Activated CD4-positive, alpha-beta T cell treated with anti-CD3 and anti-CD28 coated beads, Interleukin-2, amount 10 ng/mL, durations not matched to agents 24 days and 14 days (primary cell): ENCODE measurements at regions of chr17 and their contacts with region 1.

Region 1: DNA sequence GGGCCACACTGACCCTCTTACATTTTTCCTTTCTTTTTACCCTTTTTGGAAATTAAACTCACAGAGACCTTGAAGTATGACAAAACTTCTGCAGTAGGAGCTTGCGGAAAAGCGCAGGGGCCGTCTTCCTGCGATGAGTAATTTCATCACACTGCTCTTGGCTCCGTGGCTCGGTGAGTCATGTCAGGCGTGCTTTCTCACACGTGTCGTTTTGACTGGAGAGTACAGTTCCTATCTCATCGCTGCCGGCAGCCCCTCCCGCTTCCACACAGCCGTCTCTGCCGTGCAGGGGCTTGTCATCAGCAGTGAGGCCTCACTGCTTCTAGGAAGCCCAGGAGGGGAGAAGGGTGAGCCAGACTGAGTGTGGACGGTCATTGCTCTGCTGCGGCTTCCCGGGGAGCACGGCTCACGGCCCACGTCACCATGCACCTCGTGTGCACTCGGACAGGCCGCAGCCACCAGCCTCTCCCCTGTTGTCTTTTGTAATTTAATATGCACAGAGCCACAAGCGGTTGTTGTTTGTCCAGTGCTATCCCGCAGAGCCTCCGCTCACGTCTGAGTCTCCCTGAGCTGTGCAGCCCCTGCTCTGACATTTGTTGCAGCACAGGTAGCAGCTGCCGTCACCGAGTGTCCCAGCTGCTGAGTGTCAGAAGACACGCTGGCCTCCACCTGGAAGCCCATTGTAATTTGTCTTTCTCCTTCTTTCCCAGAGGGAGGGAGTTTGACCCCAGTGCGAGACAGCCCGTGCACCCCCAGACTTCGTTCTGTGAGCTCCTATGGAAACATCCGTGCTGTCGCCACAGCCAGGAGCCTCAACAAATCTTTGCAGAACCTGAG is 99.4 kb upstream of the CHMP6 start:
- DNase-seq: peak; percentile 95
- H3K4me3 Mint-ChIP-seq: peak overlapping the region; percentile 82
- H3K27ac Mint-ChIP-seq: peak overlapping the region; percentile 93
- H3K4me1 Mint-ChIP-seq: peaks cover 69% of the 10 kb centered on the region
- H3K27me3 Mint-ChIP-seq: no peaks in the 10 kb centered on the region

Region 2: DNA sequence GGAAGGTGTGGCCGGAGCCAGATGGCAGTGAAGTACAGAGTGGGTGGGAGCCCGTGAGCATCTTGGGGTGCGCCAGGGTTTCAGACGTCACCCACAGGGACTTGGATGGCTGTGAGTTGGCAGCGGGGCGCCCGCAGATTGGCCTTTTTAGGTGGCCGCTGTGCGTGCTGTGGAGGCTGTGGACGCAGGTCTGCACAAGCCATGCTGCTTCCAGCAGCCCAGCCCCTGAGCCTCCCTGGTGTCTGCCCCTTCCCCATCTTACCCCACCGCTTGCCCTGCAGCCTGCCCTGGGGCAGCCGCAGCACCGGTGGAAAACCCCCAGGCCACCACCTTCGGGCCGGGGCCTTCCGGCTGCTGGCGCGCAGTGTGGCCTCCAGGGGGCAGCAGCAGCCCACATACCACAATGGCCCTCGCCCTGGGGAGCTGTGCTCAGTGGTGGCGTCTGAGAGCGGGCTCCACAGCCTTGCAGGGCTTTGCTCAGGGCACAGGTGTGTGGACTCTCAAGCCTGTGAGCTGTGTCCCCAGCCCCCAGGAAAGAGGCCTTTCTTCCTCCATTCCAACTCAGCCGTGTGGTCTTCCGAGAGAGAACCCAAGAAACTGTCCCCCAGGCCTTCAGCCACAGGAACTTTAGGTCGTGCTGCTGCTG is 465.4 kb before region 1 on chr17:
- intact Hi-C with region 1: loop called (anchors 5 kb)
- DNase-seq: peak; percentile 97
- H3K4me3 Mint-ChIP-seq: no peak overlapping the region
- H3K27ac Mint-ChIP-seq: no peak overlapping the region
- H3K4me1 Mint-ChIP-seq: peaks cover 13% of the 10 kb centered on the region
- H3K27me3 Mint-ChIP-seq: no peaks in the 10 kb centered on the region

Region 3: DNA sequence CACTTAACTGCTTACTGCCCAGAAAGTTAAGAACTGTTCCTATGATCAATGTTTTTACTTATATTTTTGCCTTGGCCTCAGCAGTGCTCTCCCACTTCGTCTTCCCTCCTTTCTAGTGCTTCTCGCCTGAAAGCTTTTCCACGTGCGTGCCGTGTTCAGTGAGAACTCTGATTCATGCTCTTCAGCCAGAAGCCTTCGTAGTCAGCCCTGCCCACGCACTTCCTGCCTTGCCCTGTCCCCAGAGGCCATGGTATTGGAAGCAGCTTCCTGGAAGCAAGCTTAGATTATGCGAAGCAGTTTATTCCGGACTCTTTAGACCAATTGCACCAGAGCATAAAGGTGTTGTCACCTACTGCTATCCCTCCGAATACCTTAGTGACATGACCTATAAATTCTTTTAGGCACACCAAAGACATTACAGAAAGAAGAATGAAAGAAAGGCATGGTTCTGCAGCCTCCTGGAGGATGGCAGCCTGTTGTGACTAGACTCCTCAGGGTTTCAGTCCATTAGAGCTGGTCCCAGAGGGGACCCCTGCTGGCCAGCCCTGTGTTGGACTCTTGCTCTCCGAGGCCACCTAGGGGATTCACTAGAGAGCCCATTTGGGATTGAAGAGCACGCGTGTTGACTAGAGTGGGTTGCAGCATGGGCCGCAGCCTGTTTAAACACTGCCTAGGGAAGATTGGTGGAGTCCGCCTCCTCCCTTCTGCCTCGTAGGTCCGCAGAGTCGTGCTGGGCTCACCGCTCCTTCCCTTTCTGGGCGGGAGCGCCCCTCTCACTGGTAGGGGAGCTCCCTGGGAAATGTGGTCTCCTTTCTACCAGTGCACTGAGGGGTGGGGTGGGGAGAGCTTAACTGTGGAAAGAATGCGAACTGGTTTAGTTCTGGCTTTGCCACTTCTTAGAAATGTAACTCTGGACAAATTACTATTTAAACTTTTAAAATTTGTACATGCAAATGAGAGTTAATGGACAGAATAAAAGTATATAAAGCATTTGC is 242.3 kb before region 1 on chr17:
- intact Hi-C with region 1: loop called (anchors 2 kb)
- DNase-seq: peak; percentile 89
- H3K4me3 Mint-ChIP-seq: peak overlapping the region; percentile 63
- H3K27ac Mint-ChIP-seq: peak overlapping the region; percentile 89
- H3K4me1 Mint-ChIP-seq: peaks cover 64% of the 10 kb centered on the region
- H3K27me3 Mint-ChIP-seq: no peaks in the 10 kb centered on the region

Region 4: DNA sequence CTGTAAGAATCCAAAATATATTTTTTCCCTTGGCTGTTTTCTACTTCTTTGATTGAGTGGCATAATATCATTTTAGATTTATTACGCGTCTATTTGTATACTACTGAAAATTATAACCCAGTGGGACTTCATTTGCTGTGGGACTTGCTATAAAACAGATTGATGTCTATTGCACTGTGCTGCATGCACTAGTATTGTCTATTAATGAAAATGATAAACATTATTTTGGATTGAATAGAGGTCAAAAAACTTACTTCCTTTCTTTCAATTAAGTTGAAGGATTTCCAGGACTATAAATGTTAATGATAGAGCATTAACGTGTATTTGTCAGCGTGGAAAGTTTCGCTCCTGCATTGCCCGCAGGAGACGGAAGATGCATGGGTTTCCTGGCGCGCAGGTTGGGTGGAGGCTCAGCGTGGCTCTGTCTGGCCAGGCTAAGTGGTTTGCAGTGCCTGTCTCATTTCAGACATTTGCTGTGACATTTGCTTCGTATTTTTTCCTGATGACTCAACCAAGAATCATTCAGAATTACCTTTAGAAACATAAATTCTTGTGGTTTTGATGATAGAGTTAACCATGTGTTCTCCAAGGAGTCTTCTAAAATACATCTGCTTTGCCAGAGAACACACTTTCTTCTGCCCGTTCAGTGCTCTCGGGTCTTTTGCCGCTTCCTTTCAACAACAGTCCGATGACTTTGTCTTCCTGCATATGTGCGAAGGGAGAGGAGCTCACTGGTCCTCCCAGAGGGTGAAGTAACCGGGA is 130.9 kb before region 1 on chr17:
- intact Hi-C with region 1: loop called (anchors 1 kb)
- DNase-seq: peak; percentile 91
- H3K4me3 Mint-ChIP-seq: peak overlapping the region; percentile 76
- H3K27ac Mint-ChIP-seq: peak overlapping the region; percentile 99
- H3K4me1 Mint-ChIP-seq: peaks cover 75% of the 10 kb centered on the region
- H3K27me3 Mint-ChIP-seq: no peaks in the 10 kb centered on the region

Region 5: GRCh38 chr17:80855948-80856862 is 36.0 kb before region 1 on chr17:
- intact Hi-C with region 1: loop called (anchors 1 kb)
- DNase-seq: peak; percentile 95
- H3K4me3 Mint-ChIP-seq: peak overlapping the region; percentile 62
- H3K27ac Mint-ChIP-seq: peak overlapping the region; percentile 91
- H3K4me1 Mint-ChIP-seq: peaks cover 73% of the 10 kb centered on the region
- H3K27me3 Mint-ChIP-seq: no peaks in the 10 kb centered on the region

Region 6: DNA sequence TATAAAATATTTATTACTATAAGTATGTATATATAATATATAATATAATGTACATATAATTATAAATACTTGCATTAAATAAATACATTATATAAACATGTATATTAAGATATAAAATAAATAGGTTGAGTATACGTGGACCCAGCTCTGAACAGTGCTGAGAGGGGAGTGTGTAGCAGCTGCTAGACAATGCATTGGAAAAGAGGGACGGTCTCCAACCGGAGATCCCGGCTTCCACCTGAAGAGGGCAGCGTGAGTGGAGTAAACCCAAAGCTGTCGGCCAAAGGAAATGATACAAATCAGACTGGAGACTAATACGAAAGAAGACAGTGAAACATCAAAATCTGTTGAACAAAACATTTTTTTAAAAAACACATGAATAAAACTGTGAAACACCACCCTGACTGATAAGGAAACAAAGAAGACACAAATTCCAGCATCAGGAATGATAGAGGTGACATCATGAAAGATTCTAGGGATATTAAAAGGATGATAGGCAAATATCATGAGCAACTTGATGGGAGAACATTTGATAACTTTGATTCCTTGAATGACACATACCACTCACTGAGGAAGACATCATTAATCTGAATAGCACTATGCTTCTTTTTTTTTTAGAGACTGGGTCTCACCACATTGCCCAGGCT is 26.0 kb before region 1 on chr17:
- intact Hi-C with region 1: no loop called
- DNase-seq: peak; percentile 93
- H3K4me3 Mint-ChIP-seq: peak overlapping the region; percentile 16
- H3K27ac Mint-ChIP-seq: peak overlapping the region; percentile 74
- H3K4me1 Mint-ChIP-seq: peaks cover 74% of the 10 kb centered on the region
- H3K27me3 Mint-ChIP-seq: no peaks in the 10 kb centered on the region